Kidney (tissue), 22 donors: ENCODE measurements at regions of chr10 and their contacts with region 1.

Region 1: GRCh38 chr10:11986593-11987216 is 55.9 kb downstream of the UPF2 start:
- DNase-seq: peak; percentile 73 to 94 (median 81)
- H3K4me3 ChIP-seq: peak overlapping the region in 1 of 3 donors; percentile 21
- H3K27ac ChIP-seq: no peak overlapping the region
- H3K4me1 ChIP-seq: no peaks in the 10 kb centered on the region
- H3K27me3 ChIP-seq: no peaks in the 10 kb centered on the region
- CTCF ChIP-seq: peak; percentile 94

Region 2: DNA sequence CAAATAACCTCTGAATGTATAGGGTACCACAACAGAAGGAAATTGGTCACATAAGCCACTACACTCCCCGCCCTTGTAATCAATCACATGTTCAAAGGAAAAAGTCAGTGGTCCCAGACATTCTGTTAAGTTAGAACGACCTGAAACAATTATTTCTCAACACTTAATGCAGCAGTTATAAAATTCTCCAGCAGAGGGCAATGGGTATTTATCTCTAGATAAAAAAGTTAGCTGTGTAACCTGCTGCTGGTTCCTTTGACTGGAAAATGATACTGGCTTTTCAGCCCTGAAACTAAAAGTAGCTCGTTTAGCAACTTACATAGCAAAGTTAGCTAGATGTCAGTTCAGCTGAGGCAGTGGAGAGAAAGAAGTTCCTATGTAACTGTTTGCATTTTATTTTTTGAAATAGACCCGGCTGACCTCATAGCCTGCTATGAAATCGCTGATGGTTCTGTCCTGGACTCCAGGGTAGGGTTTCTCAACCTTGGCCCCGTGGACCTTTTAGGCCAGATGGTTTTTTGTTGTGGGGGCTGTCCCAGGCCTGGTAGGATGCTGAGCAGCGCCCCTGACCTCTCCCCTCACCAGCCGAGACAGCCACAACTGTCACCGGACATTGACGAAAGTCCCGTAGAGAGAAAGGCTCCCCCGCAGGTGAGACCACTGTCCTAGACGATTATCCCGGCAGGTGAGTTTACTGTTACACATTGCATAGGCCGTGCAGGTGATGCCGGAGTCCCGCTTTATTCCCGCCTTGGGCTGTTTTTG is 203.7 kb before region 1 on chr10:
- intact Hi-C with region 1: loop called (anchors 5 kb)
- DNase-seq: peak in 2 of 5 donors; percentile 86 to 89
- H3K4me3 ChIP-seq: no peak overlapping the region
- H3K27ac ChIP-seq: no peak overlapping the region
- H3K4me1 ChIP-seq: no peaks in the 10 kb centered on the region
- H3K27me3 ChIP-seq: no peaks in the 10 kb centered on the region
- CTCF ChIP-seq: peak; percentile 67